Right ventricle myocardium inferior (tissue), 1 donor: ENCODE measurements at regions of chrX and their contacts with region 1.

Region 1: DNA sequence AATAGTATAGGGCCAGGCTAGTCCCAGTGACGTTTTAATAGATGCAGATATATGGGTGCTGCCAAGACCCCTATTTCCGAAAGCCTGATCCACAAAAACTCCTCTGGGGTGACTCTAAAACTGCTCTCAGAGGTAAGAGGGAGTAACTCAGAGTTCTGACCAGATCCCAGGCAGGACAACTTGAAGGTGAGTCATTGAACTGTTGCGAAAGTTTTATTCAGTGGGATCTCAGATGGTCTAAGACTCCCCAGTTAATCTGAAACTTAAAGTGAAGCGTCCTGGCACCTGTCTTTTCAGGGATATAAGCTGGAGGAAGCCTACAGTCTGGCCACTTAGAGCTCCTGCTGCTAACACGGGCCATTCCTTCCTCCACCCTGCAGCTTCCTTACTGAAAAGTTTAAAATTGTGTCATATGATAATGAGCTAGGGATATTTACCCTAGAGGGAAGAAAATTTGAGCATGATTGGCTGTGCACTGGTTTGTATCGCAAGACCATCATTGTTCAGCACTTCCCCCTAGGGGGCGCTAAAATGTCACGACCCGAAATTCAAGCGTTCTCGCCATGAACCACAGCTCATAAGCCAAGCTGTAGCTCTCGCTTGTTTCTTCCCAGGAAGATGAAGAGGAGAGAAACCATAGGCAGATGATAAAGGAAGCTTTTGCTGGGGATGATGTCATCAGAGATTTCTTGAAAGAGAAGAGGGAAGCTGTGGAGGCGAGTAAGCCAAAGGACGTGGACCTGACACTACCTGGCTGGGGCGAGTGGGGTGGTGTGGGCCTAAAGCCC is 19.5 kb downstream of the UTP14A start:
- DNase-seq: no peak
- ATAC-seq: peak; percentile 79

Region 2: GRCh38 chrX:130024127-130024526 is 98.6 kb after region 1 on chrX:
- intact Hi-C with region 1: loop called (anchors 2 kb)
- DNase-seq: peak; percentile 85
- ATAC-seq: peak; percentile 91

Region 3: DNA sequence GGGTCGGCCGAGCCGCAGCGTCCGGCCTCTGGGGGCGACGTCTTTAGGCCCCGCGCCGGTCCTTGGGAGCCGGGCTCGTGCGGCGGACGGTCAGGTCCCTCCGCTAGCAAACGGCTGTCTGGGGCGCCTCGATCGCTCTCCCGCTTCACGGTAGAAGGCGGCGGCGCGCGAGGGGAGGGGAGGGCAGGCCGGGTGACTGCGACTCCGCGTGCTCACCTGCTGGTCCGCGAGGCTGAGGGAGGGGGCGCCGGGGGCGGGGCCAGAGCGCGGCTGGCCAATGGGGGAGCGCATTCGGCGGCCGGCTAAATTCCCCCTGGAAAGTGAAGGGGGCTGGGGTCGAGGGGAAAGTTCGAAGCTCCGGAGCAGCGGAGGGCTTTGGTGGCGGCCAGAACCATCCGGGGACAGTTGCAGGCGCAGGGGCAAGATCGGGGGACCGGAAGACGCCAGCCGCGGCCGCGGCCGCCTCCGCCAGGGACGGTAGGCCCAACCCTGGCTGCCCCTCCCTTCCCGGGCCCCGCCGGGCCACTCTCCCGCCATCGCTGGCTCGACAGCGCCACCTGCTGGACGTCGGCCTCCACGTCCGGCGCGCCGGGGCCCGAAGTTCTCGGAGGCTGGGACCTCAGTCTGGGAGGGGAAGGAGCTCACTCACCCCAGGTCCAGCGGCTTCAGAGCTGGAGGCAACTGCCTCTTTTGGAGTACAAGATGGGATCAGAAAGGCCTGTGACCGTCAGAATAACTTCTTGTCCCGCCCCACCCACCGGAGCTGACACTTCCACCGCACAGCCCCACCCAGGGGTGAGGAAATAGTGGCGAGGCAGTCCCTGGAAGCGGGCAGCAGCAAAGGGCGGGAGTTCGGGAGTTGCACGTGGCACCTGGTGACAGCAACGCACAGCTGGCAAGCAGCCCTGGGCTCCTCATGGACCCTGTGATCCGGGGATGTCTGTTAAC is 134.9 kb after region 1 on chrX:
- intact Hi-C with region 1: loop called (anchors 1 kb)
- DNase-seq: peak; percentile 89
- ATAC-seq: peak; percentile 93